Sigmoid colon (tissue), 7 donors: ENCODE measurements at regions of chr7 and their contacts with region 1.

Region 1: GRCh38 chr7:124152859-124153692 is 120.2 kb upstream of the TMEM229A start:
- DNase-seq: no peak
- H3K4me3 ChIP-seq: no peak overlapping the region
- H3K27ac ChIP-seq: no peak overlapping the region
- H3K4me1 ChIP-seq: no peaks in the 10 kb centered on the region
- H3K27me3 ChIP-seq: no peaks in the 10 kb centered on the region
- CTCF ChIP-seq: no peak
- EP300 ChIP-seq: no peak
- POLR2A ChIP-seq: no peak

Region 2: DNA sequence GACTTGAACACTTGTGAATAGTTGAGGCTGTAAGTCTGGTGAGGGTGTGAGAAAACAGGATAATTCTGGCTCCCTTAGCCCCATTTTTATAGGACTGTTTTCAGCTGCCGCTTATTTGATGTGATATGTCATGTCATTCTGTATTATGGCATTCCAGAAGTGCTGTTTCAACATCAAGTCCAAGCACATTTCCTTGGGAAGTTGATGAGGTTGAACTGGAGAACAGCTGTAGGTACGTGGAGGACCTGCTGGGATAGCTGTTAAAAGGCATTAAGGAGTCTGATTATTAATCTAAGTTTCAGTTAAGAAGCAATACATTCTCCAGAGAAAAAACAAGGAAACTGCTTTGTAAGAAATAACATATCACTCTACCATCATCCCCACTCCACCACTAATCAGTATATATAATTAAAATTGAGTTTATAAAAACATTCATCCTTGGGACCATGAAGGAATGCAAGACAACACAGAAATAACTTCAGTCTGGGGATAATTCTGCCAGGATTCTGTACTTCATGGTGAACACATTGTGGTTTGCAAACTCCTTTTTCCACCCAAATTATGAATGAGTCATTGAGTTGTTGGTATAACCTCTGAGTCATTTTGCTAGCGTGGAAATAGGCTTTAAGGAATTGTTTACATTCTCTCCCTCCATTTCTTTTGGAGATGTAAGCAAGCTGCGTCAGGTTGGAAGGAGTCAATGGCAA is 80.3 kb before region 1 on chr7:
- intact Hi-C with region 1: no loop called
- DNase-seq: no peak
- H3K4me3 ChIP-seq: no peak overlapping the region
- H3K27ac ChIP-seq: no peak overlapping the region
- H3K4me1 ChIP-seq: no peaks in the 10 kb centered on the region
- H3K27me3 ChIP-seq: no peaks in the 10 kb centered on the region
- CTCF ChIP-seq: no peak
- EP300 ChIP-seq: no peak
- POLR2A ChIP-seq: no peak

Region 3: GRCh38 chr7:124784879-124785818 is 632.1 kb after region 1 on chr7:
- intact Hi-C with region 1: loop called (anchors 10 kb)
- DNase-seq: no peak
- H3K4me3 ChIP-seq: no peak overlapping the region
- H3K27ac ChIP-seq: no peak overlapping the region
- H3K4me1 ChIP-seq: no peaks in the 10 kb centered on the region
- H3K27me3 ChIP-seq: no peaks in the 10 kb centered on the region
- CTCF ChIP-seq: peak in 3 of 4 experiments; percentile 50 to 69 (median 55)
- EP300 ChIP-seq: no peak
- POLR2A ChIP-seq: no peak

Region 4: DNA sequence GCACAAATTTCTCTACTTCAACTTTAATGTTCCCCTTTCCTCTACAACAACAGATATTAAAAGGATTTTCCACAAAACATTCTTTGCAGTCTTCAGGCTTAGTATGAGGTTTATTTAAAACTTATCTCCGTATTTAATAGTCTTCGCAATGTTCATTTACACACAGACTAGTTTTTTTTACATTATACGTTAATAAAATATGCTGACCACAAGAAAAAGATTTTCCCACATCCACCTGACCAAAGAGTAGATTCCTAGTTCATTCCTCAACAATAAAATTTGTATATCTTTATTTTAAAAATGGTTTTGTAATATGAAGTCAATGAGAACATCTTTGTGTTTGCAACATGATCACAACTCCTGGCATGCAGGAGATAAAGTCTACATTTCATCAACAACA is 734.2 kb after region 1 on chr7:
- intact Hi-C with region 1: no loop called
- DNase-seq: no peak
- H3K4me3 ChIP-seq: no peak overlapping the region
- H3K27ac ChIP-seq: no peak overlapping the region
- H3K4me1 ChIP-seq: no peaks in the 10 kb centered on the region
- H3K27me3 ChIP-seq: no peaks in the 10 kb centered on the region
- CTCF ChIP-seq: no peak
- EP300 ChIP-seq: no peak
- POLR2A ChIP-seq: no peak